ENCODE measurements at regions of chr12 and their contacts with region 1.

Region 1: DNA sequence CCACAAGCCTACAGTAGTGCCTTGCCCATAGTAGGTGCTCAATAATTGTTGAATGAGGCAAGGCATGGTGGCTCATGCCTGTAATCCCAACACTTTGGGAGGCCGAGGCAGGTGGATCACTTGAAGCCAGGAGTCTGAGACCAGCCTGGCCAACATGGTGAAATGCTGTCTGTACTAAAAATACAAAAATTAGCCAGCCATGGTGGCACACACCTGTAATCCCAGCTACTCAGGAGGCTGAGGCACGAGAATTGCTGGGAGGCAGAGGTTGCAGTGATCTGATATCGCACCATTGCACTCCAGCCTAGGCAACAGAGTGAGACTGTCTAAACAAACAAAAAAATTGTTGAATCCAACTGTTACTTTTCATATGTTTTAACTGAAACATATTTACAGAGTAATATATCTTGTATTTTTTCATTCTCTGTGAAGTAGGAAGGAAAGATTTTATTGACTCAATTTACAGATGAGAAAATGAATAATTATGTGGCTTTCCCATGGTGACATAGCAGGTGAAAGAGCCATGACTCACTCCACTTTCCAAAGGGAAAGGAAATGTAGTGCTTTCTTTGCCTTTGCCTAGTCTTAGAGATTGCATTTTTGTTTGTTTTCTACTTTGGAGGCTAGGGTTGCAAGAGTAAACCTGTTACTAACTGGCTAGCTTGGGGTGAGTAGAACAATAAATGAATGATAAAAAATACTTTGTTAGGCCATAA is 95.4 kb upstream of the SLC38A4 start:
- DNase-seq: peak; percentile 70
- H3K4me3 ChIP-seq: no peak overlapping the region
- H3K27ac ChIP-seq: peak overlapping the region; percentile 15
- H3K4me1 ChIP-seq: peaks cover 16% of the 10 kb centered on the region
- H3K27me3 ChIP-seq: no peaks in the 10 kb centered on the region
- CTCF ChIP-seq: no peak

Region 2: GRCh38 chr12:46686267-46686942 is 234.8 kb before region 1 on chr12:
- CTCF ChIA-PET with region 1: no interaction called
- dilution Hi-C with region 1: no loop called
- in situ Hi-C with region 1: loop called in 1 of 2 experiments (anchors 10 kb)
- intact Hi-C with region 1: no loop called
- DNase-seq: no peak
- H3K4me3 ChIP-seq: no peak overlapping the region
- H3K27ac ChIP-seq: no peak overlapping the region
- H3K4me1 ChIP-seq: no peaks in the 10 kb centered on the region
- H3K27me3 ChIP-seq: no peaks in the 10 kb centered on the region
- CTCF ChIP-seq: no peak

Region 3: GRCh38 chr12:46770501-46771183 is 150.6 kb before region 1 on chr12:
- CTCF ChIA-PET with region 1: no interaction called
- dilution Hi-C with region 1: no loop called
- in situ Hi-C with region 1: no loop called
- intact Hi-C with region 1: loop called (anchors 10 kb)
- DNase-seq: no peak
- H3K4me3 ChIP-seq: no peak overlapping the region
- H3K27ac ChIP-seq: no peak overlapping the region
- H3K4me1 ChIP-seq: peaks cover 6% of the 10 kb centered on the region
- H3K27me3 ChIP-seq: no peaks in the 10 kb centered on the region
- CTCF ChIP-seq: no peak